Activated B cell treated with CpG ODN at 0.5 μM for 24 hours (primary cell): ENCODE measurements at regions of chr4 and their contacts with region 1.

Region 1: GRCh38 chr4:161949946-161950725 is 213.7 kb downstream of the FSTL5 start:
- DNase-seq: no peak
- ATAC-seq: no peak
- H3K4me3 Mint-ChIP-seq: no peak overlapping the region
- H3K27ac Mint-ChIP-seq: no peak overlapping the region
- H3K4me1 Mint-ChIP-seq: no peaks in the 10 kb centered on the region
- H3K27me3 Mint-ChIP-seq: no peaks in the 10 kb centered on the region
- CTCF ChIP-seq: no peak

Region 2: GRCh38 chr4:161101881-161102280 is 848.3 kb before region 1 on chr4:
- CTCF ChIA-PET with region 1: no interaction called
- POLR2A ChIA-PET with region 1: no interaction called
- intact Hi-C with region 1: no loop called
- DNase-seq: no peak
- ATAC-seq: no peak
- H3K4me3 Mint-ChIP-seq: no peak overlapping the region
- H3K27ac Mint-ChIP-seq: no peak overlapping the region
- H3K4me1 Mint-ChIP-seq: no peaks in the 10 kb centered on the region
- H3K27me3 Mint-ChIP-seq: no peaks in the 10 kb centered on the region
- CTCF ChIP-seq: no peak

Region 3: GRCh38 chr4:161929956-161930355 is 20.2 kb before region 1 on chr4:
- CTCF ChIA-PET with region 1: no interaction called
- POLR2A ChIA-PET with region 1: no interaction called
- intact Hi-C with region 1: loop called (anchors 2 kb)
- DNase-seq: no peak
- ATAC-seq: no peak
- H3K4me3 Mint-ChIP-seq: no peak overlapping the region
- H3K27ac Mint-ChIP-seq: no peak overlapping the region
- H3K4me1 Mint-ChIP-seq: no peaks in the 10 kb centered on the region
- H3K27me3 Mint-ChIP-seq: no peaks in the 10 kb centered on the region
- CTCF ChIP-seq: no peak